ENCODE measurements at regions of chr12 and their contacts with region 1.

Region 1: GRCh38 chr12:6116175-6117021 is 8.1 kb downstream of the VWF start:
- DNase-seq: no peak
- H3K4me3 ChIP-seq: no peak overlapping the region
- H3K27ac ChIP-seq: no peak overlapping the region
- H3K4me1 ChIP-seq: no peaks in the 10 kb centered on the region
- H3K27me3 ChIP-seq: no peaks in the 10 kb centered on the region
- CTCF ChIP-seq: no peak

Region 2: DNA sequence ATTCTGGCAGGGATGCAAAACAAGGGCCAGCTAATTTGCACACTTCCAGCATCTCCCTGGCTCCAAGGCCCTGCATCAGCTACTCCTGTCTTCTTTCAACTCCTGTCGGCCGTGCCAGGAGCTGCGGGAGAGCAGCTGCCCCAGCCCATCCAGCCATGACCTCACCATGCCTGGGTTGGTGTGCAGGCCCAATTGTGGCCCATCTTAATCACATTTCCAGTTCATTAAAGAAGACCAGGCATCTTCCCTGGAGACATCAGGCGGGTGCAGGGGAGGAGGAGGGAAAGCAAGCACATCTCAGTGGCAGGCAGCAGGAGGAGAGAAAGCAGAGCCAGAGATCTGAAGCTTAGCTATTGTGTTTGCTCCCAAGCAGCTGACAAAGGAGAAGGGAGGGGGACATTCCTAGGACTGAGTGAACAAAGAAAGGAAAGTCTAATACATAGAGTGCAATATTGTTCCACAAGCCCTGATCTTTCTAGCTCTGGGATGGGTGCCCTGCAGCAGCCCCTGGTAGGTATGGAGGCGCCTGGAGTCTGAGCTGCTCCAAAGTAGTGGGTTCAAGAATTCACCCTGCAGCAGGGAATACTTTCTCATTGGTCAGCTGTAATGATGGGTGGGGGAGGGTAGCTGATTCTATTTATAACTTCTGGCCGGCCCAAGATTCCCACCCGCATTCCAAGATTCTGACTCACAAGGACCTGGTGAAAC is 32.0 kb before region 1 on chr12:
- CTCF ChIA-PET with region 1: no interaction called
- POLR2A ChIA-PET with region 1: interaction called, 13 read pairs
- intact Hi-C with region 1: no loop called
- DNase-seq: no peak
- H3K4me3 ChIP-seq: no peak overlapping the region
- H3K27ac ChIP-seq: no peak overlapping the region
- H3K4me1 ChIP-seq: no peaks in the 10 kb centered on the region
- H3K27me3 ChIP-seq: no peaks in the 10 kb centered on the region
- CTCF ChIP-seq: no peak

Measured in A673 (cell line).